IMR-90 (cell line): ENCODE measurements at regions of chr10 and their contacts with region 1.

Region 1: DNA sequence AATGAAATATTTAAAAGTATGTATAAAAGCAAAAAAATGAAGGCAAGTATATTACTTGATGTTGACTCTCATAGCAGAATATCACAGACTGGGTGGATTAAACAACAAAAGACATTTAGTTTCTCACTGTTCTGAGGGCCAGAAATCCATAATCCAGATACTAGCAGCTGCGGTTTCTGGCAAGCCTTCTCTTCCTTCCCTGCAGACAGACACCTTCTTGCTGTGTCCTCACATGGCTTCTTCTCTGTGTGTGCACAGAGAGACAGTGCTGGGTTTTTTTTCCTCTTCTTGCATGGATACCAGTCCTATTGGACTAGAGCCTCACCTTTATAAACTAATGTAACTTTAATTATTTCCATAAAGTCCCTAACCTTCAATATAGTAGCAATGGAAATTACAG is 127.9 kb upstream of the AKR1E2 start:
- DNase-seq: no peak
- ATAC-seq: no peak
- H3K4me3 ChIP-seq: no peak overlapping the region
- H3K27ac ChIP-seq: no peak overlapping the region
- H3K4me1 ChIP-seq: peaks cover 5% of the 10 kb centered on the region
- H3K27me3 ChIP-seq: no peaks in the 10 kb centered on the region
- CTCF ChIP-seq: no peak
- POLR2A ChIP-seq: no peak
- RAD21 ChIP-seq: no peak

Region 2: GRCh38 chr10:4736608-4737007 is 38.5 kb after region 1 on chr10:
- CTCF ChIA-PET with region 1: no interaction called
- POLR2A ChIA-PET with region 1: no interaction called
- dilution Hi-C with region 1: no loop called
- in situ Hi-C with region 1: no loop called
- intact Hi-C with region 1: loop called (anchors 5 kb)
- DNase-seq: no peak
- ATAC-seq: no peak
- H3K4me3 ChIP-seq: no peak overlapping the region
- H3K27ac ChIP-seq: no peak overlapping the region
- H3K4me1 ChIP-seq: peaks cover 3% of the 10 kb centered on the region; the same call in 1 of the 2 replicates
- H3K27me3 ChIP-seq: no peaks in the 10 kb centered on the region
- CTCF ChIP-seq: no peak
- POLR2A ChIP-seq: no peak
- RAD21 ChIP-seq: no peak

Region 3: GRCh38 chr10:4784667-4785333 is 86.7 kb after region 1 on chr10:
- CTCF ChIA-PET with region 1: no interaction called
- POLR2A ChIA-PET with region 1: no interaction called
- dilution Hi-C with region 1: no loop called
- in situ Hi-C with region 1: no loop called
- intact Hi-C with region 1: no loop called
- DNase-seq: no peak
- ATAC-seq: no peak
- H3K4me3 ChIP-seq: no peak overlapping the region
- H3K27ac ChIP-seq: no peak overlapping the region
- H3K4me1 ChIP-seq: peaks cover 3% of the 10 kb centered on the region
- H3K27me3 ChIP-seq: no peaks in the 10 kb centered on the region
- CTCF ChIP-seq: no peak
- POLR2A ChIP-seq: no peak
- RAD21 ChIP-seq: no peak